Heart right ventricle (tissue), 16 donors: ENCODE measurements at regions of chr7 and their contacts with region 1.

Region 1: DNA sequence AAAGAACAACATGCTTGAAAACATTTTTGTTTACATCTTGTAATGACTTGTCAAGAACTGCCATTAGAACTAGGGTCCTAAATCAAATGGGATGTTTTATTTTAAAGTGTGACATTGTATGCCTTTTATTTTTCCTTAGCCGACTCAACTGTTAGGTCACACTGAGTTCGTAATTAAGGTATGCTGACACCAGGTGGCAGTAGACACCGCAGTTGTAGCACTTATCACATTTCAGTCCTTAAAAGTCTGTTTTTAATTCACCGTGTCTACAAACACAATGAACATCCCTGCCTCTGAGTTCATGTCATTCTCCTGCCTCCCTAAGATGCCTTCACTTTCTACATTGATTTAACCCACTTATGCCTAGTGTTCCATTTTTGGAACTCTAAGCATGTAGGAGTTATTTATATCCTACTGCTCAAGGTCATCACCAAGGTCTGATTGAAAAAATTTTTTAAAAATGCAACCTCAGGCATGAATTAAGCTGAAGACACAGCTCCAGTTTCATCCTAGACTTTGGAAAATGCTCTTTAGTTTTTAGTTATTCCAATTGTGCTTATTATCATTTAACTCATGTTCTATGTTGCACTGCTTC is 186.1 kb downstream of the BMPER start:
- DNase-seq: no peak
- ATAC-seq: peak in 1 of 8 donors; percentile 34
- H3K4me3 ChIP-seq: no peak overlapping the region
- H3K27ac ChIP-seq: no peak overlapping the region
- H3K4me1 ChIP-seq: peaks cover 0 to 26% (median 4%) of the 10 kb centered on the region in 9 donors
- H3K27me3 ChIP-seq: no peaks in the 10 kb centered on the region
- CTCF ChIP-seq: peak in 8 of 9 donors; percentile 19 to 61 (median 52)

Region 2: DNA sequence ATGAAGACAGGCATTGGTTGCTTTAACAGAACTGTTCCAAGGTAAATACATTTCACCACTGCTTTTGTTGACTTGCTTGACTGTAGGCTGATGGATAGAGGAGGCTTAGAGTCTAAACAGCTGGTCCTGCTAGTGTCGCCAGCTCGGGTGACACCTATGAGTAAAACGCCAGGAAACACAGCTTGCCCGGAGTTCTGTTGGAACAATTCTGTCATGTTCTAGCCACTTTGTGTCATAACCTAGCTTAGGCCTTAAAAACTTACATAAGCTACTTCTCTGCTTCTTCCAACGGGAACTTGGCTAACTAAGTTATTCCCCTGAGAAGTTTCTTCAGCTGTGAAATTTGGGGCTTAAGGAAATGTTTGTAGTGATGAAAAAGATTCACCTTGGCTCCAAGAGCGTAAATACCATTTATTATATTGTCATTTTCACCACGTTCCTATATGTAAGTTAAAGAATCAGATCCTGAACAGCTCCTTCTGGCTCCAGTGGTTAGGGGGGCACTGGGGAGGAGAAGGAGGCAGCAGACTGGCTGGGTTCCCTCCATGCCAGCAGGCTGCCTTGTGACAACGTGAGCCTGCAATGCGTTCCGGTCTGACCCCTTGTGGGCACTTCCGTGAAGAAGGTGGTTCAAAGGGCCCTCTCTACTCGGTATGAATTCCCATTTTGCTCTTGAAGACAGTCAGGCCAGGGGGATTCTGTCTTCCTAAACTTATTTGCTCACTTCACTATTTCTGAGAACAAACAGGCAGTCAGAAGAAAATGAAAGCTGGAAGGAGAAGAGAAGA is 67.1 kb after region 1 on chr7:
- intact Hi-C with region 1: loop called in 1 of 10 experiments (anchors 10 kb)
- DNase-seq: peak; percentile 15 to 36
- ATAC-seq: peak; percentile 60 to 82 (median 77)
- H3K4me3 ChIP-seq: no peak overlapping the region
- H3K27ac ChIP-seq: peak overlapping the region in 1 of 10 donors; percentile 55
- H3K4me1 ChIP-seq: peaks cover 0 to 9% (median 0%) of the 10 kb centered on the region in 9 donors
- H3K27me3 ChIP-seq: no peaks in the 10 kb centered on the region
- CTCF ChIP-seq: peak in 1 of 9 donors; percentile 6